Heart right ventricle (tissue), 16 donors: ENCODE measurements at regions of chr6 and their contacts with region 1.

Region 1: GRCh38 chr6:6494677-6495076 is 93.8 kb upstream of the LY86 start:
- DNase-seq: peak; percentile 55 to 56
- ATAC-seq: peak in 7 of 8 donors; percentile 54 to 79 (median 69)
- H3K4me3 ChIP-seq: no peak overlapping the region
- H3K27ac ChIP-seq: no peak overlapping the region
- H3K4me1 ChIP-seq: peaks cover 0 to 9% (median 0%) of the 10 kb centered on the region in 9 donors
- H3K27me3 ChIP-seq: no peaks in the 10 kb centered on the region
- CTCF ChIP-seq: peak; percentile 29 to 69 (median 64)

Region 2: DNA sequence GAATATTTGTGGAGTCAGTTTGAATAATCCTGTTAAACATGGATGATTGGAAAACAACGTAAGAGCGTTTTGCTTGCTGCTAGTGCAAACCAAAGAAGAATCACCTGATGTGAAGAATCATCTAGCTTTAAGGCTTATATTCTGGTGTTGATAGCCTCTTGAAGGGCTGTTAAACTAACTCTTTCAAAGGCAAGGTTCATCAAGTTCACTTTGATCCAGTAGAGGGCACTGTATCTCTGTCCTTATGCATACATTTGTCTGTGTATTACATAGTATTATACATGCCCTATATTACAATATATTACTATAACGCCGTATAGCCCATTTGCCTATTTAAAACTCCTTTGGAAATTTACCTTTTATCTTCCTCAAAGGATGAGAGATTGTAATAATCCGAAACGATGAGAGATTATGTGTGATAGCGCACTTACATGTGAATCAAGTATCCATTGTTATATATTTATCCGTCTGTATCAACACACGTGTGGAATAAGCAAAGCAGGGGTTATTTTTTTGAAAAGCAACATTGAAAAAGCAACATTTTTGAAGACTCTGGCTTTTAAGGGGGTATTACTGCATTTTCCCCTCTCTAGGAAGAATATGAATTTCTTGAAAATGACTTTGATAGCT is 437.1 kb before region 1 on chr6:
- intact Hi-C with region 1: loop called (anchors 2 to 10 kb)
- DNase-seq: peak in 1 of 2 donors; percentile 42
- ATAC-seq: peak in 7 of 8 donors; percentile 51 to 70 (median 62)
- H3K4me3 ChIP-seq: no peak overlapping the region
- H3K27ac ChIP-seq: no peak overlapping the region
- H3K4me1 ChIP-seq: no peaks in the 10 kb centered on the region
- H3K27me3 ChIP-seq: peaks cover 0 to 25% (median 7%) of the 10 kb centered on the region in 7 donors
- CTCF ChIP-seq: peak; percentile 32 to 82 (median 71)

Region 3: GRCh38 chr6:6221787-6222535 is 272.7 kb before region 1 on chr6:
- intact Hi-C with region 1: loop called in 3 of 10 experiments (anchors 2 to 10 kb)
- DNase-seq: no peak
- ATAC-seq: no peak
- H3K4me3 ChIP-seq: no peak overlapping the region
- H3K27ac ChIP-seq: no peak overlapping the region
- H3K4me1 ChIP-seq: no peaks in the 10 kb centered on the region
- H3K27me3 ChIP-seq: peaks cover 0 to 2% (median 0%) of the 10 kb centered on the region in 7 donors
- CTCF ChIP-seq: peak in 7 of 9 donors; percentile 28 to 49 (median 37)

Region 4: DNA sequence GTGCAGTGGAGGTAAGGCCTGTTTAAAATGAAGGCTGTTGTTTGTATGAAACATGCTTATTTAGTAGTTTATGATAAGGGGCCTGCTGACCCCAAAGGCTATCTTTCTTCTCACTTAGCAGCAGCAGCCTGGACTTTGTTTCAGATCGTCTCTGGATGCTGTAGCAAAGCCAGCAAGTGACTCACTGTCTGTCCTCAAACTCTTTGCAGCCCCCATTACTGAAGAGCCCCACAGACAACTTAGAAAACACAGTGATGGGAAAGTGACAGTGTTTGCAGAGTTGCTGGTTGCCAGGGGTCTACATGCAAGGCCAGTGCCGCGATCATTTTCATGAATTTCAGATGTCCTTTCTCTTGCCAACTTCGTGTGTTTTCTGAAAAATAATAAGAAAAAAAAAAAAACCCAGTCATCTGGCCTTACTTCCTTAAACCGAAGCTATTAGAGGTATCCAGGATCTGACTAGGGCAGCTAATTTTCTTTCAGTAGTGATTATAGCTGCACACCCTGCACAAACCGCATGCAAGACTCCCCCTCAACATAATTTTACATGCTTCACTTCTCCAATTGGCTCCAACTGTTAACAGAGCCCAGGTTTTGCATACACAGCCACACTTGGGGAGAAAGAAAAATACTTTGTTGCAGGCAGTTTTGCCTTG is 162.6 kb before region 1 on chr6:
- intact Hi-C with region 1: loop called in 2 of 10 experiments (anchors 10 kb)
- DNase-seq: no peak
- ATAC-seq: peak in 7 of 8 donors; percentile 39 to 73 (median 57)
- H3K4me3 ChIP-seq: no peak overlapping the region
- H3K27ac ChIP-seq: peak overlapping the region in 7 of 10 donors; percentile 23 to 84 (median 67)
- H3K4me1 ChIP-seq: peaks cover 0 to 53% (median 21%) of the 10 kb centered on the region in 9 donors
- H3K27me3 ChIP-seq: no peaks in the 10 kb centered on the region
- CTCF ChIP-seq: no peak

Region 5: GRCh38 chr6:6538261-6538660 is 43.6 kb after region 1 on chr6:
- intact Hi-C with region 1: no loop called
- DNase-seq: no peak
- ATAC-seq: peak in 7 of 8 donors; percentile 38 to 81 (median 75)
- H3K4me3 ChIP-seq: no peak overlapping the region
- H3K27ac ChIP-seq: peak overlapping the region in 4 of 10 donors; percentile 23 to 58 (median 38)
- H3K4me1 ChIP-seq: peaks cover 0 to 23% (median 16%) of the 10 kb centered on the region in 9 donors
- H3K27me3 ChIP-seq: no peaks in the 10 kb centered on the region
- CTCF ChIP-seq: no peak

Region 6: DNA sequence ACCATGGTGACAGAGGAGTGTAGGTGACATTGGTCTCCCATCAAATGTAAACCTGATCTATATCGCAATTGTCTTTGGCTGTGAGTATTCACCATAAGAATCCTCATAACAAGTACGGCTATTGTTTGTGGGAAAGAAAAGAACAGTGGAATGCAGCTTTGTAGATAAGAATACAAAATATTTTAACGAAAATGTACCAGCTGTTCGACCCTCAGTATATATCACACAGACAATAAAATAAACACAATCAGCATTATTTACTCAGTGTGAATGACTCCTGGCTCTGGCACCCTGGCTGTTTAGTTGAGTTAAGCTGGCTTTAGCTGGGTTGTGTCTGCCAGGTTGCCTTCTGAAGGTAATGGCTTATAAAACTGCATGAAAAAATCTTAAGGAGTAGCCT is 1138.7 kb after region 1 on chr6:
- intact Hi-C with region 1: no loop called
- DNase-seq: no peak
- ATAC-seq: no peak
- H3K4me3 ChIP-seq: no peak overlapping the region
- H3K27ac ChIP-seq: no peak overlapping the region
- H3K4me1 ChIP-seq: no peaks in the 10 kb centered on the region
- H3K27me3 ChIP-seq: peaks cover 0 to 14% (median 0%) of the 10 kb centered on the region in 7 donors
- CTCF ChIP-seq: no peak